ENCODE measurements at regions of chr12 and their contacts with region 1.

Region 1: GRCh38 chr12:7806863-7807487 is 17.8 kb downstream of the NANOG start:
- DNase-seq: peak; percentile 82
- ATAC-seq: peak; percentile 61
- H3K4me3 Mint-ChIP-seq: no peak overlapping the region
- H3K27ac Mint-ChIP-seq: no peak overlapping the region
- H3K4me1 Mint-ChIP-seq: no peaks in the 10 kb centered on the region
- H3K27me3 Mint-ChIP-seq: peaks cover 2% of the 10 kb centered on the region
- CTCF ChIP-seq: peak; percentile 90

Region 2: DNA sequence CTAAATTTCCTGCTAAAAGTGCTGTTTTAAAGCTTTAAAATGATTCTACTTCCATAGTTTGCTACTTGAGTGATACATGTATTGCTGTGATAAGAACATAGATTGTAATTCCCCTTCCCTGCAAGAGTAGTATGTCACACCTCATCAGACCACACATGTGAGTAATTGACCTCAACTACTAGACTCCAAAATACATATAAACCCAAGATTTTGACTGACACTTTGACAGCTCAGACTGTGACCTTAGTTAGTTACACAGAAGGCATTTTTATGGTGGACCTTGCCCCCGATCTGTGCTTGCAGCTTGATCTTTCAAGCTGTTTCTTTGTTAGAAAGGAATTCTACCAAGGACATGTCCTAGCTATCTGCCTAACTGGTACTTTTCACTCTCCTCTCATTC is 159.9 kb before region 1 on chr12:
- CTCF ChIA-PET with region 1: interaction called, 52 read pairs
- POLR2A ChIA-PET with region 1: no interaction called
- intact Hi-C with region 1: no loop called
- DNase-seq: no peak
- ATAC-seq: peak; percentile 53
- H3K4me3 Mint-ChIP-seq: no peak overlapping the region
- H3K27ac Mint-ChIP-seq: no peak overlapping the region
- H3K4me1 Mint-ChIP-seq: no peaks in the 10 kb centered on the region
- H3K27me3 Mint-ChIP-seq: no peaks in the 10 kb centered on the region
- CTCF ChIP-seq: no peak

Region 3: GRCh38 chr12:7678738-7679137 is 128.2 kb before region 1 on chr12:
- CTCF ChIA-PET with region 1: interaction called, 33 read pairs
- POLR2A ChIA-PET with region 1: no interaction called
- intact Hi-C with region 1: loop called (anchors 1 kb)
- DNase-seq: no peak
- ATAC-seq: no peak
- H3K4me3 Mint-ChIP-seq: no peak overlapping the region
- H3K27ac Mint-ChIP-seq: no peak overlapping the region
- H3K4me1 Mint-ChIP-seq: peaks cover 9% of the 10 kb centered on the region
- H3K27me3 Mint-ChIP-seq: peaks cover 4% of the 10 kb centered on the region
- CTCF ChIP-seq: no peak